Adrenal gland (tissue), 19 donors: ENCODE measurements at regions of chr2 and their contacts with region 1.

Region 1: DNA sequence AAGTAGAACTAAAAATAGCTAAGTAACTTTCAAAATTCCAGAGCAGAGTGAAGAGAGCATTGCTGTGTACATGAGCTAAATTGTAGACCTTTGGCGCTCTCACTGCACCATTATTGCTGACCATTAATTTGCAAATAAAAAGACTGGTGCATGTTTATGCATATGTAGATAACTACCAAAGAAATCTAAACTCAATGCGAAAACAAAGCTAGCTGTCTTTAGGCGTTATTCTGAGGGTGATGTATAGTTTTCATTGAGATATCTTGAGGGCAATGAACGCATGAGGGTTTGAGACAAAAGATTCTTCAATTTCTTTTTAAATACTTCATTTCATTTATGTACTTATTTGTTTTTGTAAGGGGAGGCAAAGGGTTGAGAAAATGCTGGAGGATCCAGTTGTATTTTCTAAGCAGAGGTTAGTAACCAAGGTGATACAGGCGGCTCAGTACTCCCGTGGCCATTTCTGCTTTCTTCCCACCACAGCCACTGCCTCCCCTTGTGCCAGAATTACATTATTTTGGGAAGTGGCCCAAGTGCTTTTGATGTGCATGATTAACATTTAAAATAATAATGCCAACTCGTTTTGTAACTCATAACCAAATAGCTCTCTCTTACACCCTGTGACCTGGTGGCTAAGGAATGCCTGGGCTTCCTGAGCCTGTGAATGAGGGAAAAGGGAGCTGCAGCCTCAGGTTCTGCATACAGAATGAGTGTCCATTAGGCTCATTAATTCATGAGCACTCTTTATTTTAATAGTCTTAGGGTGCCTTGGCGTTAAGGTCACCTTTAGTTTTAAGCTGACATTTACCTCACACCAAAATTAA is 797.8 kb upstream of the GYPC start:
- DNase-seq: no peak
- H3K4me3 ChIP-seq: no peak overlapping the region
- H3K27ac ChIP-seq: no peak overlapping the region
- H3K4me1 ChIP-seq: no peaks in the 10 kb centered on the region
- H3K27me3 ChIP-seq: no peaks in the 10 kb centered on the region
- CTCF ChIP-seq: no peak
- POLR2A ChIP-seq: no peak

Region 2: DNA sequence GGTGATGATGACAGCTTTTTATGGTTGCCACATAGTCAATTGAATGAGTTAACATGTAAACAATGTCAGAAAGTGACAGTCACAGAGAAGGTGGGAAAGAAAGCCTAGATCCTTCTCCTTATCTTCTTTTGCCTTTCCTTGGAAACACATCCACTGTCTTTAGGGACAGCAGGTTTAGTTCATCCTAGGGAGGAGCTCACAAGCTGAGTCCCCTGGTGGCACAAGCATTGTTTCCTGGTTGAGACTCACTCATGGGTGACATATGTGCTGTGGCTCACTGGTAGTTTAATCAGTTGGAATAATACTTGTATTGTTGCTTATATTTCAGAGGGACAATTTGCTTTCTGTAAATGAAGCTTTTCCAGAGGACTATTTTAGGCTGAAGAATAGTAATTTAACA is 1234.6 kb before region 1 on chr2:
- intact Hi-C with region 1: loop called in 1 of 2 experiments (anchors 10 kb)
- DNase-seq: no peak
- H3K4me3 ChIP-seq: no peak overlapping the region
- H3K27ac ChIP-seq: no peak overlapping the region
- H3K4me1 ChIP-seq: no peaks in the 10 kb centered on the region
- H3K27me3 ChIP-seq: no peaks in the 10 kb centered on the region
- CTCF ChIP-seq: no peak
- POLR2A ChIP-seq: no peak